Heart left ventricle (tissue), 16 donors: ENCODE measurements at regions of chr3 and their contacts with region 1.

Region 1: GRCh38 chr3:45516829-45517228 is 77.7 kb upstream of the LIMD1 start:
- DNase-seq: no peak
- ATAC-seq: no peak
- H3K4me3 ChIP-seq: no peak overlapping the region
- H3K27ac ChIP-seq: no peak overlapping the region
- H3K4me1 ChIP-seq: peaks cover 0 to 10% (median 0%) of the 10 kb centered on the region in 12 donors
- H3K27me3 ChIP-seq: no peaks in the 10 kb centered on the region
- CTCF ChIP-seq: no peak
- POLR2A ChIP-seq: no peak

Region 2: GRCh38 chr3:45832691-45833090 is 315.9 kb after region 1 on chr3:
- intact Hi-C with region 1: loop called in 1 of 10 experiments (anchors 10 kb)
- DNase-seq: no peak
- ATAC-seq: no peak
- H3K4me3 ChIP-seq: no peak overlapping the region
- H3K27ac ChIP-seq: no peak overlapping the region
- H3K4me1 ChIP-seq: no peaks in the 10 kb centered on the region
- H3K27me3 ChIP-seq: no peaks in the 10 kb centered on the region
- CTCF ChIP-seq: peak in 9 of 12 donors; percentile 7 to 48 (median 34)
- POLR2A ChIP-seq: no peak